Natural killer cell (primary cell): ENCODE measurements at regions of chr9 and their contacts with region 1.

Region 1: DNA sequence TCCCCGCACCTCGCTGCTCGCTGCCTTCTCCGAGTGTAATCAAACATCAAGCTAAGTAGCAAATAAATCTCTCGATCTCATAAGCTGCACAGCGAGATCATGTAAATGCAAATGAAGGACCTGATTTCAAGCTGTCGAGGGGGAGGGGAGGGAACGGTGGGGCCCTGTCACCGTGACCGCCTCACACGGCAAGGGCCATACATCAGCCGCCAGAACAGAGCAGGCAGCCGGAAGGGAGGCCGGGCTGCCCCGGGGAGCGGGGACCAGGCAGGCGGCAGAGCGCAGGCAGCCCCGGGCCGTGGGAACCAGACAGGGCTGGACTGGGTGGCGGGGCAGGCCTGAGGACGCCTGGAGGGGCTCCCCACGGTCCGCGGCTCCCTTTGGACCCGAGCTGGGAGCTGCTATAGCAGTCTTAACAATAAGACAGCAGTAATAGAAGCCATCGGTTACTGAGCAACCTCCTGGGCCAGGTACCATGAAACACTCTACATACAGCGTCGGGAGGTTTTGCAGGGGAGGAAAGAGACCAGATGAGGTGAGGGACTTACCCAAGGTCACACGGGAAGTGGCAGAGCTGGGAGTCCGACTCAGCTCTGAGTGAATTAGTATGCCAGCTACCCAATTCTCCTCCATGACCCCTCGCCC is 76.8 kb downstream of the CFAP77 start:
- DNase-seq: peak; percentile 59 to 86
- ATAC-seq: peak; percentile 83 to 88 (median 87)
- H3K4me3 ChIP-seq: no peak overlapping the region
- H3K4me3 Mint-ChIP-seq: peak overlapping the region; percentile 81
- H3K27ac ChIP-seq: peak overlapping the region; percentile 72
- H3K27ac Mint-ChIP-seq: peak overlapping the region; percentile 87 to 93
- H3K4me1 ChIP-seq: peaks cover 31% of the 10 kb centered on the region
- H3K4me1 Mint-ChIP-seq: peaks cover 33 to 36% of the 10 kb centered on the region in 2 donors
- H3K27me3 ChIP-seq: peaks cover 13% of the 10 kb centered on the region
- H3K27me3 Mint-ChIP-seq: peaks cover 27 to 38% of the 10 kb centered on the region in 2 donors
- CTCF ChIP-seq: no peak

Region 2: DNA sequence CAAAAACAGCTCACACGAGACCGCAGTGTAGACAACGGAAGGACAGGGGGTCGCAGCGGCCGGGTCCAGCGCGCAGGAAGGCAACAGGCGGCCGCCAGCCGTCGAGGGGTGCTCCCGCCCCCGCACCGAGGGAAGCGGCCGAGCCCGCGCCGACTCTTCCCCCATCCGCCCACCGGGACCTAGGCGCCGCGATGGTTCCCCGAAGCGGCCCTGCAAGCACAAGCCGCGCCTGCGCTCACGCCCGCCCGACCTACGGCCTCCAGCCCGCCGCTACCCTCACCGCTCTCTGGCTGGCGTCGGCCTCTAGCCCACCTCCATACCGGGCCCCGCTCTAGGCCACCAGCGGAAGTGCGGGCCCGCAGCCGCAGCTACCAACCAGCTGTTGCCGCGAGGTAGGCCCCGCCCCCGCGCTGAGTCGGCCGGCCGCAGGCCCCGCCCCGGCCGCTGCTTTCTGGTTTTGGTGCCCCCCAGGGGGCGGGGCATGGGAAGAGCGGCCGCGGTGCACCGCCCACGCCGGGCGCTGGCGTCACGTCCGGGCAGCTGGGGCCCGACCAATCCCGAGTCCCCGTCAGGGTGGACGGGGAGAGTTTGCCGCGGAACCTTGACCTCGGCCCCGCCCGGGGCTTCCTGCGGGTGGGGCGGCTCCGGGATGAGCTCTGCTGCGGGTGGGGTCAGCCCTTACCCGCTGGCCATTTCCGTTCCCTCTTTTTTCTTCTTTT is 132.0 kb before region 1 on chr9 and contains the start of gene SETX:
- intact Hi-C with region 1: loop called (anchors 2 kb)
- DNase-seq: peak; percentile 92 to 97
- ATAC-seq: peak; percentile 81 to 92 (median 85)
- H3K4me3 ChIP-seq: peak within 1 kb of the TSS; percentile 95
- H3K4me3 Mint-ChIP-seq: peak within 1 kb of the TSS; percentile 96
- H3K27ac ChIP-seq: peak within 1 kb of the TSS; percentile 97
- H3K27ac Mint-ChIP-seq: peak within 1 kb of the TSS; percentile 77 to 96
- H3K4me1 ChIP-seq: peaks cover 45% of the 10 kb centered on the region
- H3K4me1 Mint-ChIP-seq: peaks cover 36 to 45% of the 10 kb centered on the region in 2 donors
- H3K27me3 ChIP-seq: no peaks in the 10 kb centered on the region
- H3K27me3 Mint-ChIP-seq: no peaks in the 10 kb centered on the region
- CTCF ChIP-seq: no peak
- total RNA-seq, gene SETX: 85.3 to 109 (median 97.7) TPM

Region 3: DNA sequence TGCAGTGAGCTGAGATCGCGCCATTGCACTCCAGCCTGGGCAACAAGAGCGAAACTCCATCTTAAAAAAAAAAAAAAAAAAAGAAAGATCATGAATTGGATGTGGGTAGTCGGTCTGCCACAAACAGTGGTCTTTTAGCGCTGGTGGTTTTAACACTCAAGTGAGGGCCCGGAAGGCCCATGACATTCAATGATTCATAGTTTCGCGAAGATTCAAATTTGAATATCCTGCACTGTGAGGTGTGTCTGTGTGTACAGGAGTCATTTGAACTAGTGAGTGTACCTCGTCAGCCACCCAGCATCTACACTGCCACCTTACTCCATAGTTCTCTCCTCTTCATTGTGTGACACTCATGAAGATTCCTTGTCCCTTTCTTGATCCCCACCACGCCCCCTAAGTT is 35.6 kb before region 1 on chr9:
- intact Hi-C with region 1: loop called (anchors 1 kb)
- DNase-seq: peak; percentile 64 to 73
- ATAC-seq: peak; percentile 93 to 99 (median 98)
- H3K4me3 ChIP-seq: no peak overlapping the region
- H3K4me3 Mint-ChIP-seq: peak overlapping the region; percentile 74
- H3K27ac ChIP-seq: no peak overlapping the region
- H3K27ac Mint-ChIP-seq: peak overlapping the region; percentile 51 to 81
- H3K4me1 ChIP-seq: peaks cover 27% of the 10 kb centered on the region
- H3K4me1 Mint-ChIP-seq: peaks cover 35 to 42% of the 10 kb centered on the region in 2 donors
- H3K27me3 ChIP-seq: peaks cover 23% of the 10 kb centered on the region
- H3K27me3 Mint-ChIP-seq: peaks cover 60 to 62% of the 10 kb centered on the region in 2 donors
- CTCF ChIP-seq: no peak